Right cardiac atrium (tissue), 5 donors: ENCODE measurements at regions of chr12 and their contacts with region 1.

Region 1: GRCh38 chr12:98516184-98516873 is 939 bp downstream of the TMPO start:
- DNase-seq: peak; percentile 65 to 83 (median 77)
- ATAC-seq: peak; percentile 26 to 48
- H3K4me3 ChIP-seq: peak overlapping the region; percentile 78
- H3K27ac ChIP-seq: peak overlapping the region; percentile 86
- H3K4me1 ChIP-seq: no peaks in the 10 kb centered on the region
- H3K27me3 ChIP-seq: no peaks in the 10 kb centered on the region

Region 2: DNA sequence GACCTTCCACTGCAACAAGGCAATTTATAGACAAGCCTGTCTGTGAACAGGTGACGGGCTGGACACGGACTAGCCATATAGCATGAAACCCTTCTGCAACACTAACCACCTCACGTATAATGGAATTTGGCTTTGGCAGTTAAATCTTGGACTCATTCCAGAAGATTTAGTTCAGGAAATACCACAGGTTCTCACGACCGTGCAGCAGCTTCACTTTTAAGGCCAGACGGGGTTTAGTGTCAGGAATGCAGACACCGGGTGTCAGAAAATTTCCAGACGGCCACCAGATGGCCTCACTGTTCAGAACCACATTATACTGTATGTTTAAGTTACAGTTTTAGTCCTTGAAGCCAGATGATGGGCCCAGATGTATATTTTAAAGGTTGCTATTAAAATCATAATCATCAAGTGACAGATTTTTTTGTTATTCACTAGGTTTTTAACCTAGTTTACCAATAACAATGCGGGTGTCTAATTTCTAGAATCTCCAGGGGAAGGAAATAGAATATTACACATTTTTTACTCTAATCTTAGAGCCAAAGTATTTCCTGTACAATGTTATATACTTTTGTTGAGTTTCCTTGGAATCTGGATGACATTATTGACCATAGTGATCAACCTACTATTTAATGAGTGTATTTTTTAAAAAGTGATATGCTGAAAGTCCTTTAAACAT is 91.5 kb before region 1 on chr12:
- intact Hi-C with region 1: loop called in 2 of 4 experiments (anchors 2 to 10 kb)
- DNase-seq: peak in 2 of 3 donors; percentile 54 to 80
- ATAC-seq: peak; percentile 76 to 78
- H3K4me3 ChIP-seq: no peak overlapping the region
- H3K27ac ChIP-seq: no peak overlapping the region
- H3K4me1 ChIP-seq: peaks cover 2% of the 10 kb centered on the region
- H3K27me3 ChIP-seq: no peaks in the 10 kb centered on the region

Region 3: GRCh38 chr12:98490501-98491453 is 25.6 kb before region 1 on chr12:
- intact Hi-C with region 1: loop called in 1 of 4 experiments (anchors 2 kb)
- DNase-seq: peak; percentile 79 to 93 (median 90)
- ATAC-seq: peak; percentile 89 to 93
- H3K4me3 ChIP-seq: no peak overlapping the region
- H3K27ac ChIP-seq: no peak overlapping the region
- H3K4me1 ChIP-seq: no peaks in the 10 kb centered on the region
- H3K27me3 ChIP-seq: no peaks in the 10 kb centered on the region